ENCODE measurements at regions of chr1 and their contacts with region 1.

Region 1: GRCh38 chr1:226121587-226122400 is 59.3 kb downstream of the H3-3A start:
- DNase-seq: no peak
- H3K4me3 ChIP-seq: peak overlapping the region; percentile 64 to 81 (median 76)
- H3K27ac ChIP-seq: peak overlapping the region; percentile 86 to 98 (median 94)
- H3K4me1 ChIP-seq: peaks cover 20 to 55% (median 27%) of the 10 kb centered on the region in 3 donors
- H3K27me3 ChIP-seq: no peaks in the 10 kb centered on the region
- CTCF ChIP-seq: peak; percentile 70 to 99 (median 96)
- POLR2A ChIP-seq: peak in 1 of 4 donors; percentile 35

Region 2: GRCh38 chr1:226062558-226063223 is 59.1 kb before region 1 on chr1 and contains the start of gene H3-3A:
- intact Hi-C with region 1: loop called (anchors 5 kb)
- DNase-seq: peak; percentile 91
- H3K4me3 ChIP-seq: peak within 1 kb of the TSS; percentile 80 to 87 (median 84)
- H3K27ac ChIP-seq: peak within 1 kb of the TSS; percentile 96 to 100 (median 99)
- H3K4me1 ChIP-seq: peaks cover 7 to 56% (median 34%) of the 10 kb centered on the region in 3 donors
- H3K27me3 ChIP-seq: no peaks in the 10 kb centered on the region
- CTCF ChIP-seq: peak in 2 of 6 experiments; percentile 22 to 25
- POLR2A ChIP-seq: peak in 3 of 4 donors; percentile 87 to 99 (median 97)
- total RNA-seq, gene H3-3A: 358 to 544 (median 443) TPM

Region 3: DNA sequence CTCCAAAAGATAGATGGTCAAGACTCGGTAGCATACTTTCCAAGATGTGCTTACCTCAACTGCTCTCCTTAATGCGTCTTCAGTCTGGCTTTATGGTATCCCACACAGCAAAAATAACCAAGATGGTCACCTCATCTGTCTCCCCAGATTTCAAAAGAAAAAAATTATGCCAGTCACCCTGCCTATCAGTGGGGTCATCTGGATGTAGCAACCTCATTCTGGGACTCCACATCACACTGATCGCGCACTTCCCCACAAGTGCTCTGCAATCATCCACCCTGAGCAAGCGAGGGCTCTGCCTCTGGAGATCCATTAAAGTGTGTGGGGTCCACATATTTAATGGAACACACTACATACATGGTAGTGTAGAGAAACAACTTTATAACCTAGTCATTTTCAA is 22.3 kb after region 1 on chr1:
- intact Hi-C with region 1: no loop called
- DNase-seq: no peak
- H3K4me3 ChIP-seq: no peak overlapping the region
- H3K27ac ChIP-seq: no peak overlapping the region
- H3K4me1 ChIP-seq: no peaks in the 10 kb centered on the region
- H3K27me3 ChIP-seq: no peaks in the 10 kb centered on the region
- CTCF ChIP-seq: no peak
- POLR2A ChIP-seq: no peak